Activated CD8-positive, alpha-beta T cell treated with anti-CD3 and anti-CD28 coated beads for 36 hours (primary cell): ENCODE measurements at regions of chr6 and their contacts with region 1.

Region 1: GRCh38 chr6:132813173-132813856 is 1.1 kb upstream of the RPS12 start:
- DNase-seq: peak; percentile 70
- ATAC-seq: peak; percentile 7
- H3K4me3 Mint-ChIP-seq: peak overlapping the region; percentile 98
- H3K27ac Mint-ChIP-seq: peak overlapping the region; percentile 99
- H3K4me1 Mint-ChIP-seq: peaks cover 22% of the 10 kb centered on the region
- H3K27me3 Mint-ChIP-seq: no peaks in the 10 kb centered on the region
- CTCF ChIP-seq: no peak

Region 2: DNA sequence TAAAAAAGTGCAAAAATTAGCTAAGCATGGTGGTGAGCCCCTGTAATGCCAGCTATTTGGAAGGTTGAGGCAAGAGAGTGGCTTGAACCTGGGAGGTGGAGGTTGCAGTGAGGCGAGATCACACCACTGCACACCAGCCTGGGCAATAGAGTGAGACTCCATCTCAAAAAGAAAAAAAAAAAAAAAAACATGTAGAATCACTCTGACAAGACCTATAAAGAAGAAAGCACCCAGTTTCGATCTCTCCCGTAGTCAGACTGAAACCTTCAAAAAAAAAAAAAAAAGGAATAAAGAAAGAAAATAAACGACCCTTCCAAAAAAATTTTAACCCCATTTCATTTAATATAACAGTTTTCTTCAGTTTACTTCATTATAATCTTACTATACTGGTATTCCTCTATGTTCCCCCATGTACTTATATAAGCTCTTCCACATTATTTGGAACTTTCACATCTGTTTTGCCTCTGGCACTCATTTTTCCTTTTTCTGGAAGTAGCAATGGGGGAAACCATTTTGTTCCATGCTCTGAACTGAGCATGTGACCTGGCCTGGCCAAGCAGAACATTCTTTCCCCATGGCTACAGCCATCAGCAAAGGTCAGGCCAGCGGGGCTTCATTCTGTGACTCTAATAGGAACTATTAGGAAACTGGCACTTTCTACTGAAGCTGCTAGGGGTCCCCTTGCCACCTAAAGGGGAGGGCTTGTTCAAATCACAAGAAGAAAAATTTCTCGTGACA is 24.5 kb before region 1 on chr6:
- CTCF ChIA-PET with region 1: interaction called, 3 read pairs
- POLR2A ChIA-PET with region 1: interaction called, 14 read pairs
- intact Hi-C with region 1: no loop called
- DNase-seq: no peak
- ATAC-seq: no peak
- H3K4me3 Mint-ChIP-seq: no peak overlapping the region
- H3K27ac Mint-ChIP-seq: no peak overlapping the region
- H3K4me1 Mint-ChIP-seq: peaks cover 13% of the 10 kb centered on the region
- H3K27me3 Mint-ChIP-seq: no peaks in the 10 kb centered on the region
- CTCF ChIP-seq: no peak

Region 3: DNA sequence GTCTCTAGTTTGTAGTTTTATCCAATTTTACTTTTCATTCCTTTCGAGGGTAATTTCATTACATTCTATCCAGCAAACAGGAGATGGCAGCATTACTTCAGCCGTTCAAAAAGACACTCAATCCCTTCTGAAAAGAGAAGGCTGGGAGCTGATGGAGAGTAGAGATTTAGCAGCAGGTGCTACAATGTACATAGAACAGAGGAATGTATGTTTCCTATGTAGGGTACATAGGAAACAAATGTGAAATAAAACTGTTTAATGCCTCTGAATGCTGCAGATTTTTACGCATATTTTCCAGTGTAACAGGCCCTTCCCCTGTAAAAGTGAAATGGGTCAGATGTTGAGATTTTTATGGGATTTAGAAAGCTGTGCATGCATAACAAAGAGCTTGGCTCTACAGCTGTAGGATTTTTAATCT is 17.0 kb after region 1 on chr6:
- CTCF ChIA-PET with region 1: interaction called, 7 read pairs
- POLR2A ChIA-PET with region 1: interaction called, 10 read pairs
- intact Hi-C with region 1: no loop called
- DNase-seq: peak; percentile 12
- ATAC-seq: no peak
- H3K4me3 Mint-ChIP-seq: no peak overlapping the region
- H3K27ac Mint-ChIP-seq: no peak overlapping the region
- H3K4me1 Mint-ChIP-seq: no peaks in the 10 kb centered on the region
- H3K27me3 Mint-ChIP-seq: no peaks in the 10 kb centered on the region
- CTCF ChIP-seq: peak; percentile 55

Region 4: GRCh38 chr6:133262804-133263203 is 449.5 kb after region 1 on chr6:
- CTCF ChIA-PET with region 1: no interaction called
- POLR2A ChIA-PET with region 1: no interaction called
- intact Hi-C with region 1: no loop called
- DNase-seq: no peak
- ATAC-seq: no peak
- H3K4me3 Mint-ChIP-seq: no peak overlapping the region
- H3K27ac Mint-ChIP-seq: no peak overlapping the region
- H3K4me1 Mint-ChIP-seq: no peaks in the 10 kb centered on the region
- H3K27me3 Mint-ChIP-seq: peaks cover 4% of the 10 kb centered on the region
- CTCF ChIP-seq: no peak